PC-9 (cell line): ENCODE measurements at regions of chr1 and their contacts with region 1.

Region 1: DNA sequence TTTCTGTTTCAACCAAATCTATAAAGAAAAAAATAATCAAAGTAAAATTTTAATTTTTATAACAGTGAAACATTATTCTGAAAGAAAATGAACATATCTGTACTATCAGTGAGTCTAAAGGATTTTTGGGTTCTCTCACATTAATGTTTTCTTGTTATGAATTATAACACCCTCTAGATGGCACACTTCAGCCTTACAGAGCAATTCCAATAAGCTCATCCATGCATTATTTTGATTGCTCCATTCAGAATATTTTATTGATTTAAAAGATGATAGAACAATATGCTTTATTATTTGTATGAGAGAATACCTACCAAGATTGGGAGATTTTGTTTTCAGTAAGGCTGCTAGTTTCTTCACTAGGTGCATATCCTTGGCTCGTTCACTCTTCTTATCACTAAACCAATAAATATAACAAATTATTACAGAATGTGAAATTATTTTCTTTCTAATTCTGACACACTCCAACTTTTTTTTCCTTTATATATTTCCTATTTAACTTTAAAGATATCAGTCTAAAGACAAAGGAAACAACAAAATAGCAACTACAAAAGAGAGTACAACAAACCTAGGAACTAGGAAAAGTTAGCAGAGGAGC is 82.4 kb downstream of the RAB3GAP2 start:
- DNase-seq: no peak
- H3K4me3 ChIP-seq: no peak overlapping the region
- H3K27ac ChIP-seq: no peak overlapping the region
- H3K4me1 ChIP-seq: no peaks in the 10 kb centered on the region
- H3K27me3 ChIP-seq: no peaks in the 10 kb centered on the region
- CTCF ChIP-seq: peak; percentile 69

Region 2: DNA sequence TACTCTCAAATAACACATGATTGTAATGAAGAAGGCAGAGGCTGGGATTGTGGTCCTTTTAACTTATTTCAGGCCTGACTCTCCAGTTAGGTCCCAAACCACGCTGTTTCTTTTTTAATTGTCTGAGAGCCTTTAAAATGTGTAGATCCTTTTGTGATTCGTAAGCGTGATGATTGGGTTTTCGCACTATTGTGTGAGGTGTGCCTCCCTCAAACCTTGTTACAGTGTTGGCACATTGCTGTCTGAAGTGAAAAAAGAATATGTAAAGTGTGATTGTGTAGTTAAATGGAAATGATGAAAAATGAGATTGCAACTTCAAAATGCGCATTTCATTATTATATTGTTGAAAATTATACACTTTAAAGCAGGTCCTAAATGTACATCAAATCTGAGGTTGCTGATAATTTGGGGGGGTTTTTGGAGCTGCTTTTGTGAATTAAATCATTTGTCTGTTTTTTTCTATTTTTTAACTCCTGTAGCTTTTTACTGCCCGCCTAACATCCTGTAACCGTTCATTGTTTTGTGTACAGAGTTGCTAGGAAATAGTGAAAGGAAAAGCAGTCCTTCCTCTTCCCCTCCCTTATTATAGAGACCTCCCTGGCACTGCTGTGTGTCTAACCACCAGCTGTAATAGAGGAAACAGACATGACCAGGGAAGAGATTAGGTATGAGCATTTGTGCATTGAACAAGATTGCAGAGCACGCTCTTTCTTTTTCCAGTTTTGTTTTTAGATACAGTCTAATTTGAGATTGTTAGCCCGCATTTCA is 52.6 kb before region 1 on chr1:
- CTCF ChIA-PET with region 1: no interaction called
- POLR2A ChIA-PET with region 1: no interaction called
- intact Hi-C with region 1: no loop called
- DNase-seq: no peak
- H3K4me3 ChIP-seq: no peak overlapping the region
- H3K27ac ChIP-seq: no peak overlapping the region
- H3K4me1 ChIP-seq: no peaks in the 10 kb centered on the region
- H3K27me3 ChIP-seq: no peaks in the 10 kb centered on the region
- CTCF ChIP-seq: no peak

Region 3: DNA sequence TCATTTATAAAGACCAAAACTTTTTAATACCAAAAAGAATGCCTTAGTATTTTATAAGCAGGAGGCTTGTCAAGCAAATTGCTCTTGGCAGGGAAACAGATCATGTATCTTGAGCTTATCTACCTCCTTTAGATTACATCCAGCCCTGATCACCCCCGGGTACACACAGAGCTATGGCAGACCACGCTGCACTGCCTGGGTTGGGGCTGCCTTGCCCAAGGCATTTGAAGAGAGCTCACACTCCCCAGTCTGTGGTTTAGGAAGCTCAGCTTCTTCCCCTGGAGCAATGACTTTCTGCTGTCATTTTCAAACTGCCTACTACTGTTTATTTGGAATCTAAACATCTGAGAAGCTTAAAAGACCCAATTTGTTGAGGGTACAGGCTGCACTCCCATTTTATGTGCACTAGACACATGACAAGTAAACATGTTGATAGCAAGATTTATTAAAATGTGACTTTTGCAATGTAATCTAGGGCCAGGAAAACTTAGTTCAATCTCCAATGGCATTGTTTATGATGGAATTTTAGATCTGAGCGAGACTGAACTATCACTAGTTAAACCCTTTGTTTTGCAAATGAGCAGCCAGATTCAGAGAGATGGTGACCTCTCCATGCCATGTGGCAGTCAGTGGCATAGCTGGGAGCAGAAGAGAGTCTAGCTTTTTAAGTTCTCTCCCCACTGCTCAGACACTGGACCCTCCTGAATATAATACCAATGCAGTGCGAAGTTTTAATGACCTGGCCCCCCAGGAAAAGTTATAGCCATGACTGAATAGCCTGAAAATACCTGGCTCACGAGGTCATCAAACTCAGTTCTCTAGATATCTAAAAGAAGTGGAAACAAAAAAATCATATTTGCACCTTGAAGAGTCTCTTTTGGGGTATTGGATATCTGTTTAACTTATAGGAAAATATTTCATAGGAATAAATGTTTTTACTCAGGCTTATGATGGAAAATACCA is 904.3 kb after region 1 on chr1:
- CTCF ChIA-PET with region 1: no interaction called
- POLR2A ChIA-PET with region 1: no interaction called
- intact Hi-C with region 1: loop called (anchors 5 kb)
- DNase-seq: peak in 1 of 2 experiments; percentile 9
- H3K4me3 ChIP-seq: no peak overlapping the region
- H3K27ac ChIP-seq: no peak overlapping the region
- H3K4me1 ChIP-seq: peaks cover 8% of the 10 kb centered on the region
- H3K27me3 ChIP-seq: no peaks in the 10 kb centered on the region
- CTCF ChIP-seq: no peak